Psoas muscle (tissue), 8 donors: ENCODE measurements at regions of chr15 and their contacts with region 1.

Region 1: GRCh38 chr15:67157531-67158252 is 92.3 kb downstream of the SMAD3 start:
- DNase-seq: no peak
- ATAC-seq: peak; percentile 19 to 42 (median 24)
- H3K4me3 ChIP-seq: no peak overlapping the region
- H3K27ac ChIP-seq: peak overlapping the region; percentile 80
- H3K4me1 ChIP-seq: peaks cover 71% of the 10 kb centered on the region
- H3K27me3 ChIP-seq: no peaks in the 10 kb centered on the region
- CTCF ChIP-seq: no peak

Region 2: GRCh38 chr15:67109141-67110034 is 48.3 kb before region 1 on chr15:
- intact Hi-C with region 1: loop called in 1 of 2 experiments (anchors 5 kb)
- DNase-seq: peak; percentile 79 to 89
- ATAC-seq: peak in 2 of 4 donors; percentile 11 to 23
- H3K4me3 ChIP-seq: no peak overlapping the region
- H3K27ac ChIP-seq: peak overlapping the region; percentile 90
- H3K4me1 ChIP-seq: peaks cover 79% of the 10 kb centered on the region
- H3K27me3 ChIP-seq: no peaks in the 10 kb centered on the region
- CTCF ChIP-seq: no peak

Region 3: GRCh38 chr15:67322481-67322880 is 164.8 kb after region 1 on chr15:
- intact Hi-C with region 1: no loop called
- DNase-seq: no peak
- ATAC-seq: peak in 2 of 4 donors; percentile 42 to 43
- H3K4me3 ChIP-seq: no peak overlapping the region
- H3K27ac ChIP-seq: no peak overlapping the region
- H3K4me1 ChIP-seq: no peaks in the 10 kb centered on the region
- H3K27me3 ChIP-seq: no peaks in the 10 kb centered on the region
- CTCF ChIP-seq: no peak

Region 4: GRCh38 chr15:67380921-67381320 is 223.2 kb after region 1 on chr15:
- intact Hi-C with region 1: no loop called
- DNase-seq: no peak
- ATAC-seq: no peak
- H3K4me3 ChIP-seq: no peak overlapping the region
- H3K27ac ChIP-seq: no peak overlapping the region
- H3K4me1 ChIP-seq: no peaks in the 10 kb centered on the region
- H3K27me3 ChIP-seq: no peaks in the 10 kb centered on the region
- CTCF ChIP-seq: no peak